A673 (cell line): ENCODE measurements at regions of chr1 and their contacts with region 1.

Region 1: DNA sequence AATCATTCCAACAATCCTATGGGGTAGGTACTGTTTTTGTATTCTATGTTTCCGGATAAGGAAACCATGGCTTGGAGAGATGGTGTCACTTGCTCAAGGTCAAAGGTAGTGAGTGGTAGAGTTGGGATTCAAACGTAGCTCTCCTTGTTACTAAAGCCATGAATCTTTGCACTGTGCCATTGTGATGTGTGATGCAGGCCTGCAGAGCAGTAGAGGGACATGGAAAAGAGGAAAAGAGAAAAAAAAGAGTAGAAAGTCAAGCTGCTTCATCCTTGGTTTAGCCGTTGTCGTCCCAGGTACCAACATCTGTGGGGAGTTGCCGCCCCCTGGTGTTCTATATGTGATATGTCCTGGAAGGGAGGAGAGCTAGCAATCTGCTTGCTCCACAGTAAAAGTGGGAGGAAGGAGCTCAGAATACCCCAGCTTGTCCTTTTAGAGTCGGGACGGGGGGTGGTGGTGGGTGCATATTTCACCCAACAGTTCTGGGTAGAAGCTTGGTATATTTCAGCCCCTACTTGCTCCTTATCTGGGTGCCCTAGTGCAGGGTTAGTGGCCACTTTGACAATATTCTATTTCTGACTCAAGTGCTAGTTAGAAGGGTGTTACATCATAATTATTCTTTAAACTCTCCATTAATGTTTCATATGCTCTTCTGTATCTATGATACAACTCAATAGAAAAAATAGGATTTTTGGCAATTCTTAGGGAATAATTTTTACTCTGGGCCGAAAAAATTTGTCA is 98.4 kb downstream of the EBNA1BP2 start:
- DNase-seq: peak; percentile 84
- H3K4me3 ChIP-seq: no peak overlapping the region
- H3K27ac ChIP-seq: no peak overlapping the region
- H3K4me1 ChIP-seq: peaks cover 12% of the 10 kb centered on the region
- H3K27me3 ChIP-seq: no peaks in the 10 kb centered on the region
- CTCF ChIP-seq: peak; percentile 87

Region 2: GRCh38 chr1:42456010-42456758 is 617.5 kb before region 1 on chr1 and contains the starts of genes PPCS and ZMYND12:
- CTCF ChIA-PET with region 1: interaction called, 11 read pairs
- POLR2A ChIA-PET with region 1: no interaction called
- intact Hi-C with region 1: no loop called
- DNase-seq: peak; percentile 87
- H3K4me3 ChIP-seq: peak within 1 kb of the TSS; percentile 72
- H3K27ac ChIP-seq: peak within 1 kb of the TSS; percentile 84
- H3K4me1 ChIP-seq: peaks cover 8% of the 10 kb centered on the region
- H3K27me3 ChIP-seq: peaks cover 6% of the 10 kb centered on the region
- CTCF ChIP-seq: no peak
- total RNA-seq, gene PPCS: 34.4 and 35.7 TPM in 2 replicates
- total RNA-seq, gene ZMYND12: 0.17 and 0.28 TPM in 2 replicates

Region 3: DNA sequence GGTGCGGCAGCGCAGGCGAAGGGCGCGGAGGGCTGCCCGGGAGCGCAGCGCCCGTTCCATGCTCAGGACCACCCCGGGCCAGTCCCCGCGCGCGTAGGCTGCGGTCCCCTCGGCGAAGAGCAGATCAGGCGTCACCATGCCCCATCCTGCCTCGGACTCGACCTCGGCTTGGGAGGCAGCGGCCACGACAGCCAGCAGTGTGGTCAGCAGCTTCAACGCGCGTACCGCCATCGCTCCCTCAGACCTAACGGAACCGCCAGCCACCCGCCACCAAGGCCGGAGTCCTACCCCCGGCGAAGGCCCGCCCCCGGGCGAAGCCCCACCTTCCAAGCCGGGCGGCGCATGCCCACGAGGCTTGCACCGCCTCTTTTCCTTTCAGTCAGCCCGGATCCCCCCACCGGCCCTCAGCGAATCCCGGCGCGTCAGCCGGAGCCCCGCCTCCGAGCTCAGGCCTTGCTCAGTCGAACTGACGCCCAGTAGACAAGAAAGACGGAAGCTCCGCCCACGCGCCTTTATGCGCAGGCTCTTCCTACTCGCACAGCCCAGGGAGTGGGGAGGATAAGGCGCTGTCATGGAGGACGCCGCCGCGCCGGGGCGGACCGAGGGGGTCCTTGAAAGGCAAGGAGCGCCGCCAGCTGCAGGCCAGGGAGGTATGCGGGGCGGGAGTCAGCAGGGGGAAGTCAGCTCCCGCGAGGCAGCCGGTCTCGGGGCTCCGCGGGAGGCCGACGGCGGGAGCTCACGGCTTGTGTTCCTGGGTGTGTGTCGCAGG is 306.7 kb before region 1 on chr1 and contains the starts of genes C1orf50 and P3H1:
- CTCF ChIA-PET with region 1: interaction called, 11 read pairs
- POLR2A ChIA-PET with region 1: no interaction called
- intact Hi-C with region 1: no loop called
- DNase-seq: peak; percentile 100
- H3K4me3 ChIP-seq: peak within 1 kb of the TSS; percentile 83
- H3K27ac ChIP-seq: peak within 1 kb of the TSS; percentile 89
- H3K4me1 ChIP-seq: peaks cover 17% of the 10 kb centered on the region
- H3K27me3 ChIP-seq: no peaks in the 10 kb centered on the region
- CTCF ChIP-seq: no peak
- total RNA-seq, gene C1orf50: 13.1 and 14.7 TPM in 2 replicates
- total RNA-seq, gene P3H1: 57.8 and 64.9 TPM in 2 replicates

Region 4: GRCh38 chr1:42913426-42914091 is 160.1 kb before region 1 on chr1:
- CTCF ChIA-PET with region 1: interaction called, 135 read pairs
- POLR2A ChIA-PET with region 1: no interaction called
- intact Hi-C with region 1: loop called (anchors 1 kb)
- DNase-seq: peak; percentile 90
- H3K4me3 ChIP-seq: no peak overlapping the region
- H3K27ac ChIP-seq: no peak overlapping the region
- H3K4me1 ChIP-seq: no peaks in the 10 kb centered on the region
- H3K27me3 ChIP-seq: no peaks in the 10 kb centered on the region
- CTCF ChIP-seq: peak; percentile 67

Region 5: GRCh38 chr1:42931108-42931539 is 142.5 kb before region 1 on chr1:
- CTCF ChIA-PET with region 1: interaction called, 4 read pairs
- POLR2A ChIA-PET with region 1: no interaction called
- intact Hi-C with region 1: loop called (anchors 1 kb)
- DNase-seq: peak; percentile 75
- H3K4me3 ChIP-seq: no peak overlapping the region
- H3K27ac ChIP-seq: peak overlapping the region; percentile 7
- H3K4me1 ChIP-seq: no peaks in the 10 kb centered on the region
- H3K27me3 ChIP-seq: no peaks in the 10 kb centered on the region
- CTCF ChIP-seq: peak; percentile 71

Region 6: DNA sequence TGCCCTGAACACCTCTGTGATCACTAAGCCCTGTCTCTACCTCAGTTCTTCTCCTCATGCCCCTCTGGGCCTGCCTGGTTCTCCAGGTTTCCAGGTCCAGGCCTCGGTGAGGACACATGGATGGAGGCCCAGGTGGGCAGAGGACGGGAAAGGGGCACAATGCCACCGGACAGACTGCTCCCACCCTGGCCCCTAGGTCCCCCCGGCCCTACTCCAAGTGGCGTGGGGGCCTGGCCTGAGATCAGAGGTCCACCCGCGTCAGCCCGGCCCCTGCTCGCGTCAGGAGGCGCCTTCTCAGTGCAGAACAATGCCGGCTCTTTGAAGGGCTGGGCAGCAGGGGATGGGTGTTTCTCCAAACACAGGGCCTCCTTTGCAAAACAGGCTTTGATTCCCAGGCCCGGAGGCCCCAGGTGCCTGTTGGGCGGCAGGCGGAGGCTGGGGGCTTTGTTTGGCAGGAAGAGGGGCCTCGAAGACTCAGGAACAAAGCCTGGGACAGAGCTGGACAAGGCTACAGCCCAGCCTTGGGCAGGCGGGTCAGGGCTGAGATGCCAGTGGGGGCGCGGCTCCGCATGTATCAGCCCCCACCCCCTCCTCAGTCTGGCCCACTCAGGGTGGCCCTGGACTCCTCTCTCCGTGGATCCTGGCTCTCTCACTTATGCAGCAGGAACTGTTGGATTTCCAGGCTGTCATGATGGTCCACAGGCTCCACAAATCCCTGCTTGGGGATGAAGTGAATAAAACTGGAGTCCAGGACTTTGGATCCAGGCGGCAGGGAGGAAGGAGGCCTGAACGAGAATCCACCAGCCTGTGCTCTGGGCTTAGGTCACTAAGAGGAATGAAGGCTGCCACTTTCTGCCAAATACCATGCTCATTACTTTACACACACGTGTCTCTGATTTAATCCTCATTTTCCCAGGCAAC is 37.6 kb before region 1 on chr1:
- CTCF ChIA-PET with region 1: interaction called, 10 read pairs
- POLR2A ChIA-PET with region 1: interaction called, 3 read pairs
- intact Hi-C with region 1: no loop called
- DNase-seq: no peak
- H3K4me3 ChIP-seq: no peak overlapping the region
- H3K27ac ChIP-seq: no peak overlapping the region
- H3K4me1 ChIP-seq: peaks cover 12% of the 10 kb centered on the region
- H3K27me3 ChIP-seq: no peaks in the 10 kb centered on the region
- CTCF ChIP-seq: no peak

Region 7: DNA sequence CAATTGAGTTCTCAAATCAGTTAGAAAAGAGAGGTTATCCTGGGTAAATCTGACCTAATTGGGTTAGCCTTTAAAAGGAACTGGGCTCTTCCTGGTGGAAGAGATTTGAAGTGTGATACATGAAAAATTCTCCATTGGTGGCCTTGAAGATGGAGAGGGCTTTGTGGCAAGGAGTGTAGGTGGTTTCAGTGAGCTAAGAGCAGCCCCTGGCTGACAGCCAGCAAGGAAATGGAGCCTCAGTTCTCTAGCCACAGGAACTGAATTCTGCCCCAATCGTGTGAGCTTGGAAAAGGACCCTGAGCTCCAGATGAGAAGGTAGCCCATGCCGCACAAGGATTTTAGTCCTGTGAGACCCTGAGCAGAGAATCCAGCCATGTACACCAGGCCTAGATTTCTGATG is 392.7 kb after region 1 on chr1:
- CTCF ChIA-PET with region 1: no interaction called
- POLR2A ChIA-PET with region 1: no interaction called
- intact Hi-C with region 1: no loop called
- DNase-seq: no peak
- H3K4me3 ChIP-seq: no peak overlapping the region
- H3K27ac ChIP-seq: no peak overlapping the region
- H3K4me1 ChIP-seq: no peaks in the 10 kb centered on the region
- H3K27me3 ChIP-seq: no peaks in the 10 kb centered on the region
- CTCF ChIP-seq: no peak